Naive thymus-derived CD4-positive, alpha-beta T cell (primary cell): ENCODE measurements at regions of chr3 and their contacts with region 1.

Region 1: DNA sequence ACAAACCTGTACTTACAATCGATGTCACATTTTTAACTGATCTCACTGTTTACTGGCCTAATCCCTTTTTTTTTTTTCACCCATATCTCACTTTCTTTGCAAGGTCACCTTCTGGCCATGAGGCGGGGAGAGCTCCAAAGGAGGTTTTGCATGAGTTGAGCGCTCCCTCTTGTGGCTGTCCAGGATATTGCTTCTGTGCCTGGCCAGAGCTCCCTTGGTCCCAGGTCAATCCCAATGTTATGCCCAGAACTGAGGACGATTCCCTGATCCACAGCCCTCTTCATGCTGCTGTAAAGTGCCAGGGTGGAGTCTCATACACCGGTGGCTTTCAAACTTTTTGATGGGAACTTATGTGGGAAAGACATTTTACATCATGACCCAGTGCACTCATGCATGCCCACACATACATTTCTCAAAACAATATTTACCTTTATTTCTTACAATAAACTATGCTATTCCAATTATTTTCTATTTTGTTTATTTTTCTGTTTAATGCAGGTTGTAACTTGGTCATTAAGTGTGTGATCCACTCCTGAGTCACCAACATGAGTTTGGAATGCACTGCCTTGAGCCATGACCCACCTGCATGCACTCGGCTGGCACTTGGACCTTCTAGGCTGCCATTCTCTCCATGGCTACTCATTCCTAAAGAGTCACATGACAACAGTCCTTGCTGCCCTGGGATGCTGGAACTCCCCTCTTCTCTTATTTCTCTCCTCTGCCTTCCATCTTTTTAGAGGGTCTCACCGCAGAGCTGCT is 9.6 kb upstream of the SST start:
- DNase-seq: peak; percentile 21 to 63 (median 41)
- ATAC-seq: peak; percentile 80
- H3K4me3 ChIP-seq: no peak overlapping the region
- H3K4me3 Mint-ChIP-seq: no peak overlapping the region
- H3K27ac ChIP-seq: no peak overlapping the region
- H3K27ac Mint-ChIP-seq: no peak overlapping the region
- H3K4me1 ChIP-seq: no peaks in the 10 kb centered on the region
- H3K4me1 Mint-ChIP-seq: peaks cover 0 to 2% (median 0%) of the 10 kb centered on the region in 7 donors
- H3K27me3 ChIP-seq: no peaks in the 10 kb centered on the region
- H3K27me3 Mint-ChIP-seq: peaks cover 41 to 57% (median 50%) of the 10 kb centered on the region in 5 donors

Region 2: GRCh38 chr3:187223799-187224198 is 456.0 kb before region 1 on chr3:
- CTCF ChIA-PET with region 1: interaction called, 5 read pairs
- POLR2A ChIA-PET with region 1: interaction called, 3 read pairs
- intact Hi-C with region 1: loop called in 1 of 2 experiments (anchors 1 kb)
- DNase-seq: no peak
- ATAC-seq: no peak
- H3K4me3 ChIP-seq: no peak overlapping the region
- H3K4me3 Mint-ChIP-seq: no peak overlapping the region
- H3K27ac ChIP-seq: no peak overlapping the region
- H3K27ac Mint-ChIP-seq: peak overlapping the region in 1 of 9 donors; percentile 58
- H3K4me1 ChIP-seq: no peaks in the 10 kb centered on the region
- H3K4me1 Mint-ChIP-seq: peaks cover 0 to 3% (median 0%) of the 10 kb centered on the region in 7 donors
- H3K27me3 ChIP-seq: no peaks in the 10 kb centered on the region
- H3K27me3 Mint-ChIP-seq: peaks cover 0 to 16% (median 7%) of the 10 kb centered on the region in 5 donors

Region 3: GRCh38 chr3:187616307-187616972 is 63.4 kb before region 1 on chr3:
- CTCF ChIA-PET with region 1: interaction called, 4 read pairs
- POLR2A ChIA-PET with region 1: no interaction called
- intact Hi-C with region 1: loop called (anchors 1 kb)
- DNase-seq: peak in 8 of 9 donors; percentile 3 to 44 (median 33)
- ATAC-seq: peak; percentile 79
- H3K4me3 ChIP-seq: no peak overlapping the region
- H3K4me3 Mint-ChIP-seq: no peak overlapping the region
- H3K27ac ChIP-seq: no peak overlapping the region
- H3K27ac Mint-ChIP-seq: no peak overlapping the region
- H3K4me1 ChIP-seq: no peaks in the 10 kb centered on the region
- H3K4me1 Mint-ChIP-seq: peaks cover 0 to 5% (median 0%) of the 10 kb centered on the region in 7 donors
- H3K27me3 ChIP-seq: no peaks in the 10 kb centered on the region
- H3K27me3 Mint-ChIP-seq: peaks cover 0 to 26% (median 18%) of the 10 kb centered on the region in 5 donors

Region 4: DNA sequence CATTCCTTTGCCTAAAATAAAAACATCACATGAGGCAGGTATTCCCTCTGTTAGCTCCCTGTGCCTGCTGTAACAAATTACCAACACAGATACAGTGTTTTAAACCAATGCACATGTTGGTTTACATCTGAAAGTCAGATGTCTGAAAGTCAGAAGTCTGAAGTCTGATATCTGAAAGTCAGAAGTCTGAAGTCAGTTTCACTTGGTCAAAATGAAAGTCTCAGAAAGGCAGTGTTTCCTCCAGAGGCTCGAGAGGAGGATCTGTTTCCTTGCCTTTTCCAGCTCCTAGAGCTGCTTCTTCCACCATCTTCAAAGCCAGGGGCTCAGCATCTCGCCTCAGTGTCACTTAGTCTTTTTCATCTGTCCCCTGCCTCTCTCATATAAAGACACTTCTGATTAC is 31.6 kb before region 1 on chr3:
- CTCF ChIA-PET with region 1: interaction called, 3 read pairs
- POLR2A ChIA-PET with region 1: no interaction called
- intact Hi-C with region 1: loop called in 1 of 2 experiments (anchors 1 kb)
- DNase-seq: no peak
- ATAC-seq: no peak
- H3K4me3 ChIP-seq: no peak overlapping the region
- H3K4me3 Mint-ChIP-seq: no peak overlapping the region
- H3K27ac ChIP-seq: no peak overlapping the region
- H3K27ac Mint-ChIP-seq: no peak overlapping the region
- H3K4me1 ChIP-seq: no peaks in the 10 kb centered on the region
- H3K4me1 Mint-ChIP-seq: no peaks in the 10 kb centered on the region
- H3K27me3 ChIP-seq: no peaks in the 10 kb centered on the region
- H3K27me3 Mint-ChIP-seq: peaks cover 34 to 59% (median 40%) of the 10 kb centered on the region in 5 donors

Region 5: DNA sequence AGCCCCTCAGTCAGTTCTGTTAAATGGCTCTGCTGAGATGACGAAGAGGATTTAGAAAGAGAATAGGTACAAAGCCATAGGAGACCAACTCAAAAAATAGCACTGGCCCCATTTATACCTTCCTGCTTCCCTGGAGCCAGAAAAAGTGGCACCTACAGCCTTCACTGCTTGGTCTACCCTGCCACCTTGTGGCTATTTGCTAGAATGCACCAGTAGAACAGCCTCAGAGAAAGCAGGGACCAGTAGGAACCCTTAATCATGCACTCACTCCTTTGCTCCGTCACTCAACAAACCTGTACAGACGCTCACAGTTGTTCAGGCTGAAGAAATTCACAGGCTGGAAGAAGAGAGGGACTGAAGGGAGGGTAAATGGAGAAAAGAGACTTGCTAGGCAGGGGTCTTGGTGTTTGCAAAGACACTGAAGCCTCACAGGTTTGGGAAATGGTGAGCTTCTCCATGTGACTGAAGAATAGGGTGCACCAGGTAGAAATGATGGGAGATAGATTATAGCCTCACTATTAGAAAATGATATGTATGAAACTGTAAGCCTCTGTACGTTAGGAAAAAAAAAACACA is 34.7 kb after region 1 on chr3:
- CTCF ChIA-PET with region 1: interaction called, 4 read pairs
- POLR2A ChIA-PET with region 1: no interaction called
- intact Hi-C with region 1: loop called (anchors 1 kb)
- DNase-seq: peak; percentile 37 to 73 (median 67)
- ATAC-seq: peak; percentile 92
- H3K4me3 ChIP-seq: no peak overlapping the region
- H3K4me3 Mint-ChIP-seq: no peak overlapping the region
- H3K27ac ChIP-seq: no peak overlapping the region
- H3K27ac Mint-ChIP-seq: peak overlapping the region in 1 of 9 donors; percentile 53
- H3K4me1 ChIP-seq: peaks cover 5 to 7% of the 10 kb centered on the region in 2 donors
- H3K4me1 Mint-ChIP-seq: peaks cover 8 to 17% (median 13%) of the 10 kb centered on the region in 7 donors
- H3K27me3 ChIP-seq: no peaks in the 10 kb centered on the region
- H3K27me3 Mint-ChIP-seq: peaks cover 0 to 8% (median 0%) of the 10 kb centered on the region in 5 donors